CD4-positive, alpha-beta memory T cell (primary cell): ENCODE measurements at regions of chr20 and their contacts with region 1.

Region 1: DNA sequence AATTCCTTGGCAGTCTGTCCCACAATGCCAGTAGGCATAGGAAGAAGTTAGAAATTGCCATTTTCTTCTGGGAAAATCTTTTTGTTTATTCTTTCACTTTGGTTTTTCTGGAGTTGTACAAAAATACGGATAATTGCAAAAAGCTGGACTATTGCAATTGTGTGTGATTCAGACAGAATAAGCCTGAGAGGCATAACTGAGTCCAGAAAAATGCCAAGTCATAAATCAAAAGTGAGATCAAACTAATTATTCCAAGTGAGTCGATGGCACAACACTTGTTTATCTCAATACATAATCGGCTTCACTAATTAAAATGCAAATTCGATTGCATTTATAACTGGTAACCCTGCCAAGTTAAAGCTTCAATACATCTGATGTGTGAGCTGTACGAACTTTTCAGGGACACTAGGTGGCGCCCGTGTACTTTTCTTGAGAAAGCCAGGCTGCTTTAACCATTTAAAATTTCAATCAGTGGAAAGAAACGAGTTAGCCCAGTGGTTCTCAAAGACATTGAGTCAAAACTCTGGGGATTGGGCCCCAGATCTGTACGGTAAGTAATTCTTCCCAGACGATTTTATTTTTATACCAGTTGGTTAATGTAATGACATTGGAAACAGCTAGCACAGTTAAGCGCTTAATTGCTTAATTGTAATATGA is 102.6 kb downstream of the LAMP5 start:
- DNase-seq: peak in 4 of 5 donors; percentile 20 to 36 (median 29)
- H3K4me3 ChIP-seq: no peak overlapping the region
- H3K4me3 Mint-ChIP-seq: no peak overlapping the region
- H3K27ac ChIP-seq: no peak overlapping the region
- H3K27ac Mint-ChIP-seq: no peak overlapping the region
- H3K4me1 ChIP-seq: no peaks in the 10 kb centered on the region
- H3K4me1 Mint-ChIP-seq: no peaks in the 10 kb centered on the region
- H3K27me3 ChIP-seq: no peaks in the 10 kb centered on the region
- H3K27me3 Mint-ChIP-seq: peaks cover 0 to 1% of the 10 kb centered on the region in 2 donors

Region 2: DNA sequence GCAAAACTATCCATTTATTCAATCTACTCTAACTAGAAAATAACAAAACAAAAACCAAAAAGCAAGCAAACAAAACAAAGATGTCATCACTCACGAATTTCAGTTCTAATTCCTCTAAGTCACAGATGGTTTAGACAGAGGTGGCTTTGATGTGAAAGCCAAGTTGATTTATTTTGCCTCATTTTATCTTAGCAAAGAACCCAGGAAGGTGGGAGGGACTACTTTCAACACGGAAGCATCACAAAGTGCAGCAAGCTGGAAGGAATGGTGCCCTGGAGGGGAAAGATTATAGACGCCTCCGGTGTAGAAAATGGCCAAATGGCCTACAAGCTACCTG is 14.1 kb before region 1 on chr20:
- CTCF ChIA-PET with region 1: interaction called, 31 read pairs
- POLR2A ChIA-PET with region 1: no interaction called
- intact Hi-C with region 1: no loop called
- DNase-seq: no peak
- H3K4me3 ChIP-seq: no peak overlapping the region
- H3K4me3 Mint-ChIP-seq: no peak overlapping the region
- H3K27ac ChIP-seq: no peak overlapping the region
- H3K27ac Mint-ChIP-seq: no peak overlapping the region
- H3K4me1 ChIP-seq: no peaks in the 10 kb centered on the region
- H3K4me1 Mint-ChIP-seq: no peaks in the 10 kb centered on the region
- H3K27me3 ChIP-seq: no peaks in the 10 kb centered on the region
- H3K27me3 Mint-ChIP-seq: peaks cover 1% of the 10 kb centered on the region in 2 donors

Region 3: GRCh38 chr20:9792674-9793073 is 175.7 kb after region 1 on chr20:
- CTCF ChIA-PET with region 1: no interaction called
- POLR2A ChIA-PET with region 1: no interaction called
- intact Hi-C with region 1: no loop called
- DNase-seq: no peak
- H3K4me3 ChIP-seq: no peak overlapping the region
- H3K4me3 Mint-ChIP-seq: no peak overlapping the region
- H3K27ac ChIP-seq: no peak overlapping the region
- H3K27ac Mint-ChIP-seq: peak overlapping the region in 1 of 7 donors; percentile 48
- H3K4me1 ChIP-seq: no peaks in the 10 kb centered on the region
- H3K4me1 Mint-ChIP-seq: no peaks in the 10 kb centered on the region
- H3K27me3 ChIP-seq: no peaks in the 10 kb centered on the region
- H3K27me3 Mint-ChIP-seq: no peaks in the 10 kb centered on the region

Region 4: DNA sequence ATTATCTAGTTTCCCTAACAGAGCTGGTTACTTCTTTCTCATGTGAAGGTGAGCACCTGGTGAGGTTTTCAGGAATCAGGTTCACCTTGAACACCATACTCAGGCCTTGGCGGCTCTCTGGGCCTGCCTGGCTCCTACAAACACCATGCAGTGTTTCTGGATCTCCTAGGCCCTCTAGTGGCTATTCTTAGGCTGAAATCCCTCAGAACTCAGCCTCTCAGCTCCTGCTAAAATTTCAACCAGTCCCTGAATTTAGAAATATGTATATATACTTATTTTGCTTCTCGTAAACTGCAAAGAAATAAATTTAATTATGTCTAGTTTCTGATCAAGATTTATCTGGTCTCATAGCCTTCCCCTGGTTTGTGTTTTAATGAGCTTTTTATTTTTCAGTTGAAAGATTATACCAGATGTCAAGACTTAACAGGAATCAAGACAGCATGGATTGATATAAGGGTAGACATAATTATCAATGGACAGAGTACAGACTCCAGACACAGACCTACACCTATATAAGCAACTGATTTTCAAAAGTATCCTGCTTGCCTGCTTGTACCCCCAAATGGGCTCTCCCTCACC is 473.7 kb after region 1 on chr20:
- CTCF ChIA-PET with region 1: interaction called, 28 read pairs
- POLR2A ChIA-PET with region 1: no interaction called
- intact Hi-C with region 1: no loop called
- DNase-seq: peak in 4 of 5 donors; percentile 17 to 39 (median 22)
- H3K4me3 ChIP-seq: no peak overlapping the region
- H3K4me3 Mint-ChIP-seq: no peak overlapping the region
- H3K27ac ChIP-seq: no peak overlapping the region
- H3K27ac Mint-ChIP-seq: no peak overlapping the region
- H3K4me1 ChIP-seq: no peaks in the 10 kb centered on the region
- H3K4me1 Mint-ChIP-seq: no peaks in the 10 kb centered on the region
- H3K27me3 ChIP-seq: no peaks in the 10 kb centered on the region
- H3K27me3 Mint-ChIP-seq: peaks cover 4 to 5% of the 10 kb centered on the region in 2 donors

Region 5: GRCh38 chr20:10250830-10251289 is 633.9 kb after region 1 on chr20:
- CTCF ChIA-PET with region 1: no interaction called
- POLR2A ChIA-PET with region 1: no interaction called
- intact Hi-C with region 1: no loop called
- DNase-seq: no peak
- H3K4me3 ChIP-seq: no peak overlapping the region
- H3K4me3 Mint-ChIP-seq: no peak overlapping the region
- H3K27ac ChIP-seq: no peak overlapping the region
- H3K27ac Mint-ChIP-seq: no peak overlapping the region
- H3K4me1 ChIP-seq: no peaks in the 10 kb centered on the region
- H3K4me1 Mint-ChIP-seq: no peaks in the 10 kb centered on the region
- H3K27me3 ChIP-seq: no peaks in the 10 kb centered on the region
- H3K27me3 Mint-ChIP-seq: peaks cover 3 to 4% of the 10 kb centered on the region in 2 donors

Region 6: DNA sequence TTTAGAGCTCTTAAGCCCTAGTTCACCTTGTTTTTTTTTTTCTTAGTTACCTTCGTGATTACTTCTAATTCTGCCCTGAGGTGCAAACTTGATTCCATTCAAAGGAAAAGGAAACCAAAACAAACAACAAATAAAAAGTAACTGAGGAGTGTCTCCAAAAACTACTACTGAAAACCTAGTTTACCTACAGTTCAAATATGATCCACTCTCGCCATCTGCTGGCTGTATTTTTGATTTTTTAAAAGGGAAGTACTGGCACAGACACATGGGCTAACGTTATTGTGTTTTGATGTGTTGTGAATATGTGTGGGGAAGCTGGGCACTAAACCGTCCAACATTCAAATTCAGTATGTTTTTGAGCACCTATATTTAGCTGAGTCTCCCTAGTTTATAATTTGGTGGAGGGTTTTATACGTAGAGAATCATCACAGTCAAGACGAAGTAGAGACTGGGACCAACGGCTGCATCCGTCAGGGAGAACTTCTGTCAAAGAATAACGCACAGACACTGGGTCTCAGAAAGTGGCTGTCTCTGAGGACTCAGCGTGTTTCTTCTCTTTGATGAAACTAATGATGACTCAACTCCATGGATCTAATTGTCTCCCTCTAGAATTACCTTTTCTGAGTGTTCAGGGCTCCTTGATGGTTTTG is 1927.2 kb after region 1 on chr20:
- CTCF ChIA-PET with region 1: interaction called, 3 read pairs
- POLR2A ChIA-PET with region 1: no interaction called
- intact Hi-C with region 1: loop called (anchors 5 kb)
- DNase-seq: peak in 1 of 5 donors; percentile 4
- H3K4me3 ChIP-seq: no peak overlapping the region
- H3K4me3 Mint-ChIP-seq: no peak overlapping the region
- H3K27ac ChIP-seq: no peak overlapping the region
- H3K27ac Mint-ChIP-seq: no peak overlapping the region
- H3K4me1 ChIP-seq: no peaks in the 10 kb centered on the region
- H3K4me1 Mint-ChIP-seq: no peaks in the 10 kb centered on the region
- H3K27me3 ChIP-seq: no peaks in the 10 kb centered on the region
- H3K27me3 Mint-ChIP-seq: no peaks in the 10 kb centered on the region